ENCODE measurements at regions of chr5 and their contacts with region 1.

Region 1: DNA sequence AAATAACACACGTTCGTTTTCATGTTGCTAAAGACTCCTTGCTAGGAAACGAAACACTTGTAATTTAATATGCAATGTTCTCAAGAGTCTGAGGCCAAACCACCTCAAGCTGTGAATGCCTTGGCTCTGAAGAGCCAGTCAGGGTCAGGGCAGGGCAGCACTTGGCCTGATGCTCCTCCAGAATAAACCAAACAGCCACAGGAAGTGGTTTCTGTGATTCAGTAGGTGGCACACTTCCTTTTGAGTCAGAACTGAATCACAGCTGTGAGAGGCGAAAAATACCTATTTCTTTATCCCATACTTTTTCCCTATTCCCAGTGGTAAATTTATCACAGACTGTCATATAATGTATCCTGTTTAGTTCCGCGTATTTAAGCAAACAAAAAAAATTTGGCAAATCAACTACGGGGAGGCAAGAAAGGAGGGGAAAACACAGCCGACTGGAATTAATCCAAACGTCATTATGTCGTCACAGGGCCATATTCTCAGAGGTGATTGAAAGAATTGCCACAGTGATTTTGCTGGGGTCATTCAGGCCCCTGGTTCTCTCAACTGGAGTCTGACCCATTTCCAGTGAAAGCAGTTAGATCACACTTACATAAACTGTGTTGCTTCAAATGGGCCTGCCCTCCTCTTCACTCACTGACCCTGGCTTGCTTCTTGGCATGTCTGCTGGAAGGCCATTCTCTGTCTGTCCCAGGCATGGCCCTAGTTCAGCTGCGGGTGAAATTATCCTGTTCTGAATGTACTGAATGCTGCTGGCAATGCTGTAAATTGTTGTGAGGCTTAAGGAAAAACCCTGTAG is 71.2 kb downstream of the ARRDC3 start:
- DNase-seq: peak; percentile 17 to 81 (median 68)
- ATAC-seq: peak; percentile 86
- H3K4me3 ChIP-seq: peak overlapping the region; percentile 15
- H3K4me3 Mint-ChIP-seq: peak overlapping the region; percentile 59 to 82 (median 76)
- H3K27ac ChIP-seq: peak overlapping the region; percentile 53
- H3K27ac Mint-ChIP-seq: peak overlapping the region; percentile 84 to 98 (median 95)
- H3K4me1 ChIP-seq: peaks cover 33 to 39% of the 10 kb centered on the region in 2 donors
- H3K4me1 Mint-ChIP-seq: peaks cover 29 to 55% (median 48%) of the 10 kb centered on the region in 7 donors
- H3K27me3 ChIP-seq: no peaks in the 10 kb centered on the region
- H3K27me3 Mint-ChIP-seq: no peaks in the 10 kb centered on the region

Region 2: DNA sequence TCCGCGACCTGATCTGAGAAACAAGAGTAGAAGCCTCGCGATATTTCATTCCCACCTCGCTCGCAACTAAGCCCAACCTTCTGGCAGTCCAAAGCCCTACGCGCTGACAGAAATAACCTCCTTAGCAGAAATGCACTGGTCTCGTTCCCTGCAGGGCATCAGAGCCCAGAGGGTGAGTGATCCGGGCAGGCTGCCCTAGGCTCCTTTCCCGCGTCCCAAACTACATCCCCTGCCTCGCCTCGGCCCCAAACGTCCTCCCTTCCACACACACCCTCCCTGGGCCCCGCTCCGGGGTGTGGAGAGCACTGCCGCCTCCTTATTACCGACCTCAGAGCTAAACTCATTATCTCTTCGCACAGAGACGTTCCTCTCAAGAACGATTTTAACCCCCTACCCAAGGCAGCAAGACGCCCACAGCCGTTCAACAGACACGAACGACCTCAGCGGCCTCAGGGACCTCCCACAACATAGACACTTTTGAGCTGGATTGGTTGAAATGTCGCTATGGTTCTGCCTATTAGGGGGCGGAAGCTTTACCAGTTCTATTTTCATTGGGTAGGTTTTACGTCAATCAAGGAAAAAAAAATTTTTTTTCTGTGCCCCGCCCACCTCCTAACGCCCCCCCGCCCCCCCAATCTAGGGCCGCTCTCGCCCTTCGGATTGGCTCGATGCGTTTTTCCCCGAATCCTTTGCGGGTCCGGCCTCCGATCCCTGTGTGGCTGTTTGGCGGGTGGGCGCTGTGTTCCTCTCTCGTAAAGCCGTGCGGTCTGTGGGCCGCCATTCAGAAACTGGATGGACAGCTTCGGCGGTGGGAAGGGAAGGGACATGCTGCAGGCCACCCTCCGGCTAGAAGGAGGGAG is 902.4 kb before region 1 on chr5 and contains the start of gene CETN3:
- CTCF ChIA-PET with region 1: no interaction called
- POLR2A ChIA-PET with region 1: interaction called, 7 read pairs
- intact Hi-C with region 1: loop called in 1 of 2 experiments (anchors 5 kb)
- DNase-seq: peak; percentile 72 to 93 (median 88)
- ATAC-seq: peak; percentile 94
- H3K4me3 ChIP-seq: peak within 1 kb of the TSS; percentile 100
- H3K4me3 Mint-ChIP-seq: no peak within 1 kb of the TSS
- H3K27ac ChIP-seq: peak within 1 kb of the TSS; percentile 93
- H3K27ac Mint-ChIP-seq: no peak within 1 kb of the TSS
- H3K4me1 ChIP-seq: peaks cover 7 to 13% of the 10 kb centered on the region in 2 donors
- H3K4me1 Mint-ChIP-seq: peaks cover 12 to 26% (median 16%) of the 10 kb centered on the region in 7 donors
- H3K27me3 ChIP-seq: no peaks in the 10 kb centered on the region
- H3K27me3 Mint-ChIP-seq: peaks cover 0 to 4% (median 0%) of the 10 kb centered on the region in 5 donors
- total RNA-seq, gene CETN3: 4.4 to 31.0 (median 22.1) TPM

Region 3: GRCh38 chr5:90474235-90475109 is 837.4 kb before region 1 on chr5 and contains the starts of genes MBLAC2 and POLR3G:
- CTCF ChIA-PET with region 1: no interaction called
- POLR2A ChIA-PET with region 1: no interaction called
- intact Hi-C with region 1: loop called in 1 of 2 experiments (anchors 2 kb)
- DNase-seq: peak; percentile 80 to 93 (median 92)
- ATAC-seq: peak; percentile 95
- H3K4me3 ChIP-seq: peak within 1 kb of the TSS; percentile 95
- H3K4me3 Mint-ChIP-seq: peak within 1 kb of the TSS; percentile 90 to 99 (median 98)
- H3K27ac ChIP-seq: peak within 1 kb of the TSS; percentile 76
- H3K27ac Mint-ChIP-seq: peak within 1 kb of the TSS; percentile 86 to 98 (median 94)
- H3K4me1 ChIP-seq: peaks cover 15 to 16% of the 10 kb centered on the region in 2 donors
- H3K4me1 Mint-ChIP-seq: peaks cover 18 to 51% (median 43%) of the 10 kb centered on the region in 7 donors
- H3K27me3 ChIP-seq: no peaks in the 10 kb centered on the region
- H3K27me3 Mint-ChIP-seq: no peaks in the 10 kb centered on the region
- total RNA-seq, gene MBLAC2: 5.2 to 17.6 (median 7.1) TPM
- total RNA-seq, gene POLR3G: 0.51 to 3.0 (median 1.5) TPM

Region 4: DNA sequence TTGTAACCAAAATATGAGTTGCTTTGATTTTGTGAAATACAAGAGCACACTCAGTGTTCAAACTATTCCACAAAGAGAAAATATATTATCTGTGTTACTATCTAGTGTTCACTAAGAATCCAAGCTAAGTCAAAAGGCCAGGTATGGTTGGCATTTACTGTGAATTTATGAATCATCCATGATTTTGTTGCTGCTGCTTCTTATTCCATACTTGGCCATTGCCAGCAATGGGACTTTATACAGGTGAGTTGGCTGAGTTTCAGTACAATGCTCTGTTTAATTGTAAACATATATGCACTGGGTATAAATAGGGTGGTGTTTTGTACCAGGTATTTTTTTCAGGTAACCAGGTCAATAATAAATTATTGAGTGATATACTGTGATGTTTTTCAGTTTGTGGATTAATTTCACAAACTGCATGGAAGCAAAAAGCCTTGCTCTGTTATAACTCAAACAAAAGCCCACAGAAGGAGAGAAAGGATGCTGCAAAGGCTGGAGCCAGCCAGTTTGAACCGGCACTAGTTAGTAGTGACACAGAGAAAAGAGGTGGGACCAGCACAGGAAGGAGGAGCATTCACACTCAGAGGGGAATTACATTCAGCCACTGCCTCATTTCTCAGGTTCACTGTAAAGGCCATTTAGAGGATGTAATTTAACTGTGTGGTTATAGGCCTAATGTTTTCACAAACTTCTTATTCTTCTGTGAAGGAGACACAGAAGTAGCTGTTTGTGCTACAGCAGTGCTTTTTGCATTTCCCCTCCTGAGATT is 371.5 kb before region 1 on chr5:
- CTCF ChIA-PET with region 1: no interaction called
- POLR2A ChIA-PET with region 1: no interaction called
- intact Hi-C with region 1: no loop called
- DNase-seq: peak in 8 of 9 donors; percentile 5 to 70 (median 37)
- ATAC-seq: peak; percentile 96
- H3K4me3 ChIP-seq: no peak overlapping the region
- H3K4me3 Mint-ChIP-seq: peak overlapping the region in 3 of 10 donors; percentile 10 to 55 (median 32)
- H3K27ac ChIP-seq: no peak overlapping the region
- H3K27ac Mint-ChIP-seq: peak overlapping the region in 8 of 9 donors; percentile 45 to 87 (median 55)
- H3K4me1 ChIP-seq: peaks cover 0 to 6% of the 10 kb centered on the region in 2 donors
- H3K4me1 Mint-ChIP-seq: peaks cover 4 to 20% (median 11%) of the 10 kb centered on the region in 7 donors
- H3K27me3 ChIP-seq: no peaks in the 10 kb centered on the region
- H3K27me3 Mint-ChIP-seq: no peaks in the 10 kb centered on the region

Region 5: GRCh38 chr5:91266184-91266705 is 45.7 kb before region 1 on chr5:
- CTCF ChIA-PET with region 1: no interaction called
- POLR2A ChIA-PET with region 1: interaction called, 4 read pairs
- intact Hi-C with region 1: loop called in 1 of 2 experiments (anchors 5 kb)
- DNase-seq: no peak
- ATAC-seq: peak; percentile 53
- H3K4me3 ChIP-seq: no peak overlapping the region
- H3K4me3 Mint-ChIP-seq: no peak overlapping the region
- H3K27ac ChIP-seq: no peak overlapping the region
- H3K27ac Mint-ChIP-seq: no peak overlapping the region
- H3K4me1 ChIP-seq: no peaks in the 10 kb centered on the region
- H3K4me1 Mint-ChIP-seq: peaks cover 9 to 27% (median 18%) of the 10 kb centered on the region in 7 donors
- H3K27me3 ChIP-seq: no peaks in the 10 kb centered on the region
- H3K27me3 Mint-ChIP-seq: peaks cover 0 to 14% (median 0%) of the 10 kb centered on the region in 5 donors

Region 6: DNA sequence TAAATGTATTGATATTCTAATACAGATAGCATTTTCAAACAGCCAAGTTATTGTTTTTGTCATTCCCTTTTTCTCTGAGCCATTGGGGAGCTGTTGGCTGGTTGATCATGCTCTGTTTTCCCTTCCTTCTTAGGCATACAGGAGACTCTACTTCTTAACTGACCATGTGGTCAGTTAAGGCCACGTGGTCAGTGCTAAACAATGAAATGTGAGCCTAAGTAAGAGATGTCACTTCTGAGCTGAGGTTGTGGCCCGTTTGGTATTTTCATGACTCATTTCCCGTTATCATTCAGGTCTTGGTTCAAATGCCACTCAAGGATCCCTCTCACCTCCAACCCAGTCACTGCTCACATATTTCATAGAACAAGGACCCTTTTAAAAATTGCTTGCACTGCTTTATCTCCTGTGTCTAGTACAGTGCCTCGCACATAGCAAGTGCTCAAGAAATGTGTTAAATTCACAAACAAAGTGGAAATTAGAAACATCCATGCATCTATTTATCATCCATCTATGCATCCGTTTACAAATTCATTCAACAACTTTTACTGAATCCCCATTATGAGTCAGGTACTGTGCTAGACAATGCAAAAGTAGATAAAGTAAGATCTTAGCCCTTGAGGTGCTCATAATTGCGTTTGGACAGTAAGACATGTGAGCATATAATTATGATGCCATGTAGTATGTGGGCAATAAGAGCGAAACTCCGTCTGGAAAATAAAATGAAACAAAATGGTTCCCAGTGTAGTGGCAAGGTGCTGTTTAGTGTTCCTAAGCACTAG is 20.6 kb after region 1 on chr5:
- CTCF ChIA-PET with region 1: no interaction called
- POLR2A ChIA-PET with region 1: no interaction called
- intact Hi-C with region 1: loop called in 1 of 2 experiments (anchors 1 kb)
- DNase-seq: no peak
- ATAC-seq: peak; percentile 56
- H3K4me3 ChIP-seq: no peak overlapping the region
- H3K4me3 Mint-ChIP-seq: peak overlapping the region in 1 of 10 donors; percentile 9
- H3K27ac ChIP-seq: no peak overlapping the region
- H3K27ac Mint-ChIP-seq: peak overlapping the region in 2 of 9 donors; percentile 10 to 53
- H3K4me1 ChIP-seq: peaks cover 0 to 3% of the 10 kb centered on the region in 2 donors
- H3K4me1 Mint-ChIP-seq: peaks cover 0 to 28% (median 9%) of the 10 kb centered on the region in 7 donors
- H3K27me3 ChIP-seq: no peaks in the 10 kb centered on the region
- H3K27me3 Mint-ChIP-seq: peaks cover 0 to under 1% (median 0%) of the 10 kb centered on the region in 5 donors

Region 7: GRCh38 chr5:91373600-91373999 is 61.7 kb after region 1 on chr5:
- CTCF ChIA-PET with region 1: interaction called, 4 read pairs
- POLR2A ChIA-PET with region 1: interaction called, 26 read pairs
- intact Hi-C with region 1: no loop called
- DNase-seq: no peak
- ATAC-seq: no peak
- H3K4me3 ChIP-seq: no peak overlapping the region
- H3K4me3 Mint-ChIP-seq: peak overlapping the region in 1 of 10 donors; percentile 18
- H3K27ac ChIP-seq: no peak overlapping the region
- H3K27ac Mint-ChIP-seq: peak overlapping the region in 6 of 9 donors; percentile 18 to 78 (median 58)
- H3K4me1 ChIP-seq: peaks cover 13 to 50% of the 10 kb centered on the region in 2 donors
- H3K4me1 Mint-ChIP-seq: peaks cover 5 to 86% (median 66%) of the 10 kb centered on the region in 7 donors
- H3K27me3 ChIP-seq: no peaks in the 10 kb centered on the region
- H3K27me3 Mint-ChIP-seq: no peaks in the 10 kb centered on the region

Region 8: DNA sequence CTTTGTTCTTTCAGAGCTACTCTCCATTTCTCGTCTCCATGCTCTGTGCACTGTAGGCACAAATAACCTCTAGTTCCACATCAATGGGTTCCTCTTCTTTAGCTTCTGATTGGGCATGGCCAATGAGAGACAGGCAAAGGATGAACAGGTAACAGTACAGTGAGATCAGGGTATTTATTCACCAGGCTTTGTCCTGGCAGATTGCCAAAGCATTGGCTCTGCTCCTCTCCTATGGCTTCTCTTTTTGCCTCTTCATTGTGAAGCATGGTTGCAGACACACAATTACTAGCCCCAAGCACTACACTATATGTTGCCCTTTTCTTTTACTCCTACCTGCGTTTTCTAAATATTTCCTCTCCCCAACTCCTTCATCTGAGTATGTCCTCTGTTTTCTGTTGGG is 286.3 kb after region 1 on chr5:
- CTCF ChIA-PET with region 1: no interaction called
- POLR2A ChIA-PET with region 1: no interaction called
- intact Hi-C with region 1: no loop called
- DNase-seq: no peak
- ATAC-seq: no peak
- H3K4me3 ChIP-seq: no peak overlapping the region
- H3K4me3 Mint-ChIP-seq: no peak overlapping the region
- H3K27ac ChIP-seq: no peak overlapping the region
- H3K27ac Mint-ChIP-seq: no peak overlapping the region
- H3K4me1 ChIP-seq: no peaks in the 10 kb centered on the region
- H3K4me1 Mint-ChIP-seq: no peaks in the 10 kb centered on the region
- H3K27me3 ChIP-seq: no peaks in the 10 kb centered on the region
- H3K27me3 Mint-ChIP-seq: peaks cover 0 to 9% (median under 1%) of the 10 kb centered on the region in 5 donors

Measured in naive thymus-derived CD4-positive, alpha-beta T cell (primary cell).